ENCODE measurements at regions of chr18 and their contacts with region 1.

Region 1: DNA sequence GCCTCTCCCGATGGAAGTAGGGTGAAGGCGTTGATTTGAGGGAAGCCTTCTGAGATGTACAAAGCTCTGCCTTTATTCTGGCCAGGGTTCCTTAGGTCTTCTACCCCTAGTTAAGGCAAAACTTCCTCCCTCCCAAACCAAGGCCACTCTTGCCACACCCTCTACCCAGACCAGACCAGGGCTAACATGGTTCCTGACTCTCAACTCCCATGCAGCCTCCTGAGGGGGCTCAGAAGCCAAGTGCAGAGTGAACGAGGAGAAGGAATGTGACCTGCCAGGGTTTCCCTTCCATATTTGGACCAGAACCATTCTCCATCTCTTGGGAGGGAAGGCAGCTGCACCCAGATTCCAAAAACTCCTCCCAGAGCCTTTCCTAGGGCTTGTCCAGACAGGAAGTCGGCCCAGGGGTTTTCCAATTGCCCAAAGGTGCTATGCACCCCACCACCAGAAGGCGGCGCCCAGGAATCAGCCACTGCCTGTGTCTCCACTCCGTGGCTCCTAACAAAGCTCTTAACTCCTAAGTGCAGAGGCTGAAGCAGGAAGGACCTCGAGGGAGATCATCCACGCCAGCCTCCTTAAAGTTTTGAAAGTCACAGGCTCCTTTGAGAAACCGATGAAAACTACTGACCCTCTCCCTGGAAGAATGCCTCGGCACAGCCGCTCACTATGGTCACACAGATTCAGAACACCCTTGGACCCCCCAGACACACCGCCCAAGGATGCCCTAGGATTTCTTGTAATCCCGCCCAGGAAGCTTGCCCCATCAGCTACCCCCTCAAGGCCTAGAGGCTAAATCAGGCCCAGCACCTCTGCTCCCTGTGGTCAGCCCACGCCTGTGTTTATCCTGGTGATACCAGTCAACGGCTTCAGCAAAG is 157.8 kb downstream of the SMAD2 start:
- DNase-seq: no peak
- H3K4me3 ChIP-seq: no peak overlapping the region
- H3K27me3 ChIP-seq: peaks cover 4% of the 10 kb centered on the region; the same call in 1 of the 2 replicates
- CTCF ChIP-seq: peak; percentile 96

Region 2: GRCh38 chr18:47709556-47709955 is 63.1 kb before region 1 on chr18:
- CTCF ChIA-PET with region 1: no interaction called
- POLR2A ChIA-PET with region 1: no interaction called
- DNase-seq: no peak
- H3K4me3 ChIP-seq: no peak overlapping the region
- H3K27me3 ChIP-seq: no peaks in the 10 kb centered on the region
- CTCF ChIP-seq: no peak

Region 3: DNA sequence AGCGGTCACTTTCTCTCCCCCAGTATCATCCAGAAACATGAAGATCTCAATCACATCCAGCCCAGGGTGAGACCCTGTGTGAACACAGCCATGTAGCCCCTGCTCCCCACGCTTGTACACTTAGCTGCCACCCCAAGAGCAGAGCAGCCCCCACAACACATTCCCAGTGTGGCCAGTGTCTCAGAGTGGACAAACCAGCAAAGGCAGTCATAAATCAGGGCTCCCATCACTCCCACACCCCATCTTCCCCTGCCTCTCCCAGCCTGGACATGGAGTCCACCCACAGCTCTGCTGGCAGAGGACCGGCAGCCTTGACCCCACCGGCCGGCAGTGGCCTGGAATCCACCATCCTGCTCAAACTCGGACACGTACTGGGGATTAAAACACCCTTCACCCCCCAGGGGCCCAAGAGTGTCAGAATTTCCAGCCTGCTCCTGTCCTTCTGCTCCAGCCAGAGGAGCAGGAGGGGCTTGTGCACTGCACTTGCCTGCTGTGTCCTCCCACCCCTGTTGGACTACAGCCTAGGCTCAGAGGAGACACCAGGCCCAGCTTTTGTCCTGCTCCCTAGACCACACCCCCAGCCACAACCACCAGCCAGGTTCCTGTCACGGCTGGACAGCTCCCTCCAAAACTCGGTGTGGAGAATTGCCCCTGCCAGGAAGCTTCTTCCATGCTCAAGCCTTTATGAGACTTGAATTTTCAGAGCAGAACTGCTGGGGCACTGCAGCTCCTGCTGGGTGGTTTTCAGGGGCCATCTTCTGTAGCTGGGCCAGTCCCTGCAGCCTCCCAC is 48.2 kb before region 1 on chr18:
- CTCF ChIA-PET with region 1: no interaction called
- POLR2A ChIA-PET with region 1: no interaction called
- DNase-seq: no peak
- H3K4me3 ChIP-seq: no peak overlapping the region
- H3K27me3 ChIP-seq: no peaks in the 10 kb centered on the region
- CTCF ChIP-seq: no peak

Region 4: DNA sequence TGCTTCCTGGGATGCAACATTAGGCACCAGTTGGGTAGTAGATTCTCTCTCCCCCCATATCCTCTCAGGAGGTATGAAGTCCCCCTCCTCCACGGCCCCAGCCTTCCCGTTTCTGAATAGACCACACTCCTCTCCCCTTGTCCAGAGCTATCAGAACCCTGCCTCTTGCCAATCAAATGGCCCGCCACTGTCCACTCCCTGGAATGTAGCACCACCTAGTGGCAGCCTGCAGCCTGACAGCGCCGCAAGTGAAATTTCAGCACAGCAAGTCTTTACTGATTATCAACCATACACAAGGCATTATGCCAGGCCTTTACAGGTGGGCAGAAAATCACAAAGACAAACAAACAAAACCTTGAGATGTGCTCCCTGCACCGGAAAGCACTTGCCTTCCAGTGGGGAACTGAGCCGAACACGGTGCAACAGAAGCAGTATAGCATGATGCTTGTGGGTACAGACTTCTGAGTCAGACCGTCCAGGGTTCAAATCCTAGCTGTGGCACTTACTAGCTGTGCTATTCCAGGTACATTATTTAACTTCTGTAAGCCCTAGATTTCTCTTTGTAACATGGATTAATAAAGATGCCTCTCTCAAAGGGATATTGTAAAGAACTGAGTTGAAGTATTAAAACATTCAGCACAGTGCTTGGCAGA is 16.1 kb before region 1 on chr18:
- CTCF ChIA-PET with region 1: interaction called, 17 read pairs
- POLR2A ChIA-PET with region 1: no interaction called
- DNase-seq: no peak
- H3K4me3 ChIP-seq: no peak overlapping the region
- H3K27me3 ChIP-seq: no peaks in the 10 kb centered on the region; the same call in 1 of the 2 replicates
- CTCF ChIP-seq: peak; percentile 97

Region 5: DNA sequence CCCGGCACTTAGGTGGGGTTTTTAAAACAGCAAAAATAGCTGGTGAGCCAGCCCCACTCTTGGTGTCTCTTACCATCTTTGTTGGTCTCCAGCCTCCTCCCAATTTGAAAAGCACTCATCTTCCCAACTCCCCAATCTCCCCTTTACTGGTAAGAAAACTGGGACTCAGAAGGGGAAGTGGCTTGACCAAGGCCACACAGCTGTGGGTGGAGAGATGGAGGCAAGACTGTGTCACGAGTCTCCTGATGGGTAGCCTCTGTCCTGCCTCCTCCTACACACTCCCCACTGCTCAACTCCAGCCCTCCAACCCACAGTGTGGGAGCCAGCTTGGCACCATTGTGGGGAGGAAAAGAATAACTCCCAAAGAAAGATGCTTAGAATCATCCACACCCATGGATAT is 17.4 kb after region 1 on chr18:
- CTCF ChIA-PET with region 1: interaction called, 13 read pairs
- POLR2A ChIA-PET with region 1: no interaction called
- DNase-seq: no peak
- H3K4me3 ChIP-seq: no peak overlapping the region
- H3K27me3 ChIP-seq: peaks cover 1% of the 10 kb centered on the region; the same call in 1 of the 2 replicates
- CTCF ChIP-seq: no peak

Region 6: GRCh38 chr18:48007955-48008701 is 235.5 kb after region 1 on chr18:
- CTCF ChIA-PET with region 1: interaction called, 16 read pairs
- POLR2A ChIA-PET with region 1: no interaction called
- DNase-seq: no peak
- H3K4me3 ChIP-seq: peak overlapping the region; percentile 49
- H3K27me3 ChIP-seq: peaks cover 13% of the 10 kb centered on the region
- CTCF ChIP-seq: peak; percentile 28; the same call in 1 of the 2 replicates

Region 7: GRCh38 chr18:48017635-48018034 is 245.0 kb after region 1 on chr18:
- CTCF ChIA-PET with region 1: interaction called, 38 read pairs
- POLR2A ChIA-PET with region 1: no interaction called
- DNase-seq: no peak
- H3K4me3 ChIP-seq: no peak overlapping the region
- H3K27me3 ChIP-seq: peaks cover 18% of the 10 kb centered on the region
- CTCF ChIP-seq: no peak

Region 8: GRCh38 chr18:48022531-48023329 is 250.1 kb after region 1 on chr18:
- CTCF ChIA-PET with region 1: interaction called, 38 read pairs
- POLR2A ChIA-PET with region 1: no interaction called
- DNase-seq: no peak
- H3K4me3 ChIP-seq: no peak overlapping the region
- H3K27me3 ChIP-seq: peaks cover 23% of the 10 kb centered on the region
- CTCF ChIP-seq: peak; percentile 66

Region 9: GRCh38 chr18:48030616-48031480 is 258.2 kb after region 1 on chr18:
- CTCF ChIA-PET with region 1: interaction called, 18 read pairs
- POLR2A ChIA-PET with region 1: no interaction called
- DNase-seq: no peak
- H3K4me3 ChIP-seq: no peak overlapping the region
- H3K27me3 ChIP-seq: peaks cover 2% of the 10 kb centered on the region; the same call in 1 of the 2 replicates
- CTCF ChIP-seq: peak; percentile 83